ENCODE measurements at regions of chr3 and their contacts with region 1.

Region 1: GRCh38 chr3:25664810-25665314 is at the start of gene TOP2B:
- DNase-seq: peak; percentile 96 to 99
- H3K4me3 ChIP-seq: peak within 1 kb of the TSS; percentile 65 to 86 (median 84)
- H3K27ac ChIP-seq: peak within 1 kb of the TSS; percentile 96 to 100 (median 99)
- H3K4me1 ChIP-seq: peaks cover 20 to 46% (median 33%) of the 10 kb centered on the region in 4 donors
- H3K27me3 ChIP-seq: no peaks in the 10 kb centered on the region
- CTCF ChIP-seq: no peak
- EP300 ChIP-seq: no peak
- POLR2A ChIP-seq: peak in 2 of 4 donors; percentile 74 to 90
- total RNA-seq, gene TOP2B: 35.6 to 266 (median 113) TPM

Region 2: DNA sequence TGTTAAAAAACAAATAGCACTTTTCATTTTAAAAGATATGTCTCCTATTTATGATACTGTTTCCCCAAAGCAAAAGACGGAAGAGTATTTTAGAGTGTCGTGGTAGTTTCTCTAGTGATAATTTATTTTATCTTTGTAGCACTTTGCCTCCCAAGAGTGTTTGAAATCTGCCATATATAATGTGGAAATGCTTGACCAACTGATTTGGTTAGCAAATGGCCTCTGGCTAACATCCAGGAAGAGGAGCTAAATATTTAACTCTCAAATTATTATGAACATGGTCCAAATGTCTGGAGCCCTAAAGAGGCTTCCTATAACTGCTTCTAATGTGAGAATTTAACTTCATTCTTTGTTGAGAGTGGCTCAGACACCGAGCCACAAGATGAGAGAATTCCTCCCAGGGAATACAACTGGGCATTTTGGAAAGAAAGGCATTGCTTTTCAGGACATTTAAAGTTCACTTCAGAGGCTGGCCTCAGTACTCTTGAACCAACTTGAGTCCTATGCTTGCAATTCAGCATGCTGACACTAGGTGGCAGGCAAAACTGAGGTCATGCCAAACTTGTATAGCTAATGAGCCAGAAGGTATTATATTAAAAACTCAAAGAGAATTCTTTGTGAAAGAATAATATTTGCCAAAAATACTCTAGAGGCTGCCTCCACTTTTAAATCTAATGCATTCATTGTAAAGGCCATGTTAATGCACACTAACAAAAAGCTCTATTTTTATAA is 132.3 kb before region 1 on chr3:
- intact Hi-C with region 1: no loop called
- DNase-seq: peak in 1 of 2 donors; percentile 28
- H3K4me3 ChIP-seq: no peak overlapping the region
- H3K27ac ChIP-seq: no peak overlapping the region
- H3K4me1 ChIP-seq: peaks cover 0 to 22% (median 14%) of the 10 kb centered on the region in 4 donors
- H3K27me3 ChIP-seq: no peaks in the 10 kb centered on the region
- CTCF ChIP-seq: peak in 2 of 7 experiments; percentile 17 to 26
- EP300 ChIP-seq: no peak
- POLR2A ChIP-seq: no peak

Region 3: DNA sequence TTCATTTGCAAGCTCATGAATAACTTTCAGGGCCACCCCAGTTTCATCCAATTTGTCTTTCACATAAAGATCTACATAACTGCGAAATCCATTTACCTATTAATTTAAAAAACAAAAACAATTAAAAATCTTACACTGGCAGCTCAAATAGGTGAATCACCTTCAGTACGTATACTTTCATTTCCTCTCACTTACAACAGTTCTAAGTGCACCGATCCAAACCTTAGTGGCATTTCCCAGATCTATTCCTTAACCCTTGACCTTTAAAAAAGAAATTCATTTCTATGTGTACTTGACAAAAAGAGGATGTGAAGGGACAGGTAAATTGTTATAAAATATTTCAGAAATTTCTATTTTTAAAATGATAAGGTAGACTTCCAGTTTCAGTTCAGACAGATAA is 30.9 kb before region 1 on chr3:
- intact Hi-C with region 1: no loop called
- DNase-seq: no peak
- H3K4me3 ChIP-seq: no peak overlapping the region
- H3K27ac ChIP-seq: no peak overlapping the region
- H3K4me1 ChIP-seq: peaks cover 0 to 29% (median 6%) of the 10 kb centered on the region in 4 donors
- H3K27me3 ChIP-seq: no peaks in the 10 kb centered on the region
- CTCF ChIP-seq: no peak
- EP300 ChIP-seq: no peak
- POLR2A ChIP-seq: no peak

Region 4: GRCh38 chr3:25782938-25783660 is 118.2 kb after region 1 on chr3 and contains the start of gene NGLY1:
- intact Hi-C with region 1: loop called (anchors 5 kb)
- DNase-seq: peak; percentile 89 to 96
- H3K4me3 ChIP-seq: peak within 1 kb of the TSS; percentile 82 to 94 (median 89)
- H3K27ac ChIP-seq: peak within 1 kb of the TSS; percentile 94 to 98 (median 95)
- H3K4me1 ChIP-seq: peaks cover 13 to 36% (median 23%) of the 10 kb centered on the region in 4 donors
- H3K27me3 ChIP-seq: no peaks in the 10 kb centered on the region
- CTCF ChIP-seq: peak in 3 of 7 experiments; percentile 32 to 67 (median 34)
- EP300 ChIP-seq: no peak
- POLR2A ChIP-seq: peak in 2 of 4 donors; percentile 39 to 68
- total RNA-seq, gene NGLY1: 16.8 to 64.8 (median 41.7) TPM

Measured in stomach (tissue), 19 donors.